ENCODE measurements at regions of chr5 and their contacts with region 1.

Region 1: GRCh38 chr5:145553177-145553576 is 282.0 kb downstream of the PRELID2 start:
- DNase-seq: no peak
- H3K4me3 ChIP-seq: no peak overlapping the region
- H3K27ac ChIP-seq: no peak overlapping the region
- H3K4me1 ChIP-seq: no peaks in the 10 kb centered on the region
- CTCF ChIP-seq: no peak

Region 2: GRCh38 chr5:145443266-145443915 is 109.8 kb before region 1 on chr5:
- CTCF ChIA-PET with region 1: no interaction called
- POLR2A ChIA-PET with region 1: no interaction called
- intact Hi-C with region 1: no loop called
- DNase-seq: no peak
- H3K4me3 ChIP-seq: no peak overlapping the region
- H3K27ac ChIP-seq: no peak overlapping the region
- H3K4me1 ChIP-seq: no peaks in the 10 kb centered on the region
- CTCF ChIP-seq: no peak

Region 3: GRCh38 chr5:145510324-145510723 is 42.9 kb before region 1 on chr5:
- CTCF ChIA-PET with region 1: no interaction called
- POLR2A ChIA-PET with region 1: no interaction called
- intact Hi-C with region 1: no loop called
- DNase-seq: no peak
- H3K4me3 ChIP-seq: no peak overlapping the region
- H3K27ac ChIP-seq: no peak overlapping the region
- H3K4me1 ChIP-seq: no peaks in the 10 kb centered on the region
- CTCF ChIP-seq: no peak

Region 4: DNA sequence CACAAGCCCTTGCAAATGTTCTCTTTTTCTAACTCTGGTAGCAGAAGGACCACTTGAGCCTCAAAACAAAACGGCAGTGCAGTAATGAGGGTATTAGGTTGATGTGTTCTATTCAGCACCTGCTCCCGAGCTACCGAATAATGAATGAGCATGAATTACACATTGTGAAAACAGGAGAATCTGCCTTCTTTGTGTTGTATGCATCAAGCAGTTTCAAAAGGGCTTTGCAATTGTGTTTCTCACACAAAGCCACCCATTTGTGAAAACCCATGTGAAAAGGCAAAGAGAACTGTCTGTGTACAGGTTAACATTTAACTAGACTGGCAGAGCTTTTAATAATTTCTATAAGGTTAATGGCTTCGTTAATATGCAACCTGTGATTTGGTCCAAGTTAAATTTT is 1779.5 kb after region 1 on chr5:
- CTCF ChIA-PET with region 1: no interaction called
- POLR2A ChIA-PET with region 1: interaction called, 12 read pairs
- intact Hi-C with region 1: no loop called
- DNase-seq: no peak
- H3K4me3 ChIP-seq: no peak overlapping the region
- H3K27ac ChIP-seq: no peak overlapping the region
- H3K4me1 ChIP-seq: no peaks in the 10 kb centered on the region
- CTCF ChIP-seq: no peak

Measured in OCI-LY7 (cell line).